ENCODE measurements at regions of chr5 and their contacts with region 1.

Region 1: DNA sequence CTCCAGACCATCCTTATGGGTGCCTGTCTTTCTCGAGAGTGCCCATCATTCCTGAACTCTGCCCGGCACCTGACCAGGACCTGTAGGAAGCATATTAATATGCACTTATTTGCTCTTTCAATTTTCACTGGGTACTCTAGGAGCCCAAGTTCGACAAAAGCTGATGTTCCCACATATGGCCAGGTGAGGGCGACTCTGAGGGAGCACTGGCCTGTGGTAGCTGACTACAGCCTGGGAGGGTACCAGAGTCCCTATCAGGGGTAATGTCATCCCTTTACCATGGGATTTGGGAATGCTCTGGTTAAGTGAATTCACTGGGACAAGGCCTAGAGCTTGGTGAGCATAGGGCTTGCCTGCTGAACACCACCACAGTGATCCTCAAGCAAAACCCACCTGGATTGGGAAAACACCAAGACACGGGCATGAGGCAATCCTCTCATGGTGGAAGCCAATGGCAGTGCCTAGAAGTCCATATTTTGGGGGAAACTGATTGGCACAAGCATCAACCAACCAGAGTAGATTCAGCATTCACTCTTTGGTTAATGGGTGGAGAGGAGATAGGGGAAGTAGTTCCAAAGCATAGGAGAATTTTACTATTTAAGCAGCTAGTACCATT is 112.2 kb downstream of the MTX3 start:
- DNase-seq: peak; percentile 70
- ATAC-seq: peak; percentile 70
- H3K4me3 Mint-ChIP-seq: no peak overlapping the region
- H3K27ac Mint-ChIP-seq: no peak overlapping the region
- H3K4me1 Mint-ChIP-seq: no peaks in the 10 kb centered on the region
- H3K27me3 Mint-ChIP-seq: peaks cover 1% of the 10 kb centered on the region

Region 2: DNA sequence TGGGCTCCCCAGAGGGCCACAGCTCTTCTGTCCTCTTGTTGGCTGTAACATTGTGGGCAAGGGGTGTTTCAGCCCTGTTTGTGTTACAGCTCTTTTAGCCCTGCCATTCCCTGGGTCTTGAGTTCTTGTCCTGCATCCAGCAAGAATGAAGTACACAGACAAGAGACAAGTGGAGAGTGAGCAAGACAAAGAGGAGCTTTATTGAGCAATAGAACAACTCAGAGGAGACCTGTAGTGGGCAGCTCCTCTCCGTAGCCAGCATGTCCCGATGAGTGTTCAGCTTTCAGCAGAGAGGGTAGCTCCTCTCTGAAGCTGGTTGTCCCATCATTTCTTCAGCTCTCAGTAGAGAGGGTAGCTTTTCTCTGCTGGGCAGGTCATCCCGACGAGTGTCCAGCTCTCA is 620.0 kb before region 1 on chr5:
- CTCF ChIA-PET with region 1: no interaction called
- POLR2A ChIA-PET with region 1: no interaction called
- intact Hi-C with region 1: no loop called
- DNase-seq: no peak
- ATAC-seq: no peak
- H3K4me3 Mint-ChIP-seq: no peak overlapping the region
- H3K27ac Mint-ChIP-seq: no peak overlapping the region
- H3K4me1 Mint-ChIP-seq: peaks cover 43% of the 10 kb centered on the region
- H3K27me3 Mint-ChIP-seq: no peaks in the 10 kb centered on the region

Region 3: GRCh38 chr5:79514391-79515105 is 364.3 kb before region 1 on chr5:
- CTCF ChIA-PET with region 1: no interaction called
- POLR2A ChIA-PET with region 1: no interaction called
- intact Hi-C with region 1: no loop called
- DNase-seq: peak; percentile 94
- ATAC-seq: peak; percentile 82
- H3K4me3 Mint-ChIP-seq: peak overlapping the region; percentile 93
- H3K27ac Mint-ChIP-seq: peak overlapping the region; percentile 97
- H3K4me1 Mint-ChIP-seq: peaks cover 35% of the 10 kb centered on the region
- H3K27me3 Mint-ChIP-seq: peaks cover 15% of the 10 kb centered on the region

Region 4: GRCh38 chr5:80308526-80308925 is 429.7 kb after region 1 on chr5:
- CTCF ChIA-PET with region 1: no interaction called
- POLR2A ChIA-PET with region 1: no interaction called
- intact Hi-C with region 1: loop called in 1 of 2 experiments (anchors 5 kb)
- DNase-seq: no peak
- ATAC-seq: no peak
- H3K4me3 Mint-ChIP-seq: no peak overlapping the region
- H3K27ac Mint-ChIP-seq: no peak overlapping the region
- H3K4me1 Mint-ChIP-seq: no peaks in the 10 kb centered on the region
- H3K27me3 Mint-ChIP-seq: no peaks in the 10 kb centered on the region

Region 5: DNA sequence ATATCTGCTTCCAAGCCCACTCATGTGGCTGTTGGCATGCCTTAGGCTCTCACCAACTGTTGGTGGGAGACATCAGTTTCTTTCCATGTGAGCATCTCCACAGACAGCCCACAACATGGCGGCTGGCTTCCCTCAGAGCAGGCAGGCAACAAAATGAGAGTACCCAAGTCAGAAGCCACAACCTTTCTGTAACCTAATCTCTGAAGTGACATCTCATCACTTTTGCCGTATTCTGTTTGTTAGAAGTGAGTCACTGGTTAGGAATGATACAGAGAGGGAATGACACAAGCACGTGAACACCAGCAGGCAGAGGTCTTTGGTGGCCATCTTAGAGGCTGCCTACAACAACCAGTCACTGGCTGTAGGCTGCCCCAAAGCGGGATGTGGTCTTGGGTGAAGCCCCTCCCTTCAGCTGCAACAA is 992.7 kb after region 1 on chr5:
- CTCF ChIA-PET with region 1: no interaction called
- POLR2A ChIA-PET with region 1: no interaction called
- intact Hi-C with region 1: no loop called
- DNase-seq: peak; percentile 76
- ATAC-seq: peak; percentile 97
- H3K4me3 Mint-ChIP-seq: no peak overlapping the region
- H3K27ac Mint-ChIP-seq: peak overlapping the region; percentile 61
- H3K4me1 Mint-ChIP-seq: peaks cover 27% of the 10 kb centered on the region
- H3K27me3 Mint-ChIP-seq: no peaks in the 10 kb centered on the region